Prostate gland (tissue), 2 donors: ENCODE measurements at regions of chr4 and their contacts with region 1.

Region 1: DNA sequence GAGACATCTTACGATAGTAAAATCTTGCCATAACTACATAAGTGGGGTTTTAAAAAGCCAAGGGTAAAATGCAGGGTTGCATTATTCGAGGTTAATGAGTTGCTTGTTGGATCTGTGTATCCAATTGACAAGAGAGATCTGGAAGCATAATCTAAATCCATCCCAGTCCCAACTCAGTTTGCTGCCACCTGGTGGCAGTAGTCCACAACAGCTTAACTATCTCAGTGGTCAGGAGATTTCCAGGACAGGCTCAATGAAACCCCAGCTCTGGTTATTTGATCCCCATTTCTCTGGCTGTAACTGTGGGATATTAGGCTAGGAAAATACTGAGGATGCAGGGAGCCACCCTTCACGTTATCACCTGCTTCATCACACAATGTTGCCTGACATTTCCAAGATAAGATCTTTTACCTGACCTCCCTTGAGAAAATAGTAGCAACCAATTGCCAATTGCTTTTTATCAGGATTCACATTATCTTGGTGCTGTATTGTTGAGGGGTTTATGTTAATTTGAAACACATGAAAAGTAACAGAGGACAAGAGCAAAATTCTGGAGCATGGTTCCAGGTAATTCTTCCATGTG is 88.2 kb upstream of the TNIP3 start:
- DNase-seq: peak; percentile 59
- H3K4me3 ChIP-seq: no peak overlapping the region
- H3K27ac ChIP-seq: no peak overlapping the region
- H3K4me1 ChIP-seq: no peaks in the 10 kb centered on the region
- H3K27me3 ChIP-seq: no peaks in the 10 kb centered on the region
- CTCF ChIP-seq: peak; percentile 70 to 85 (median 72)
- POLR2A ChIP-seq: no peak

Region 2: DNA sequence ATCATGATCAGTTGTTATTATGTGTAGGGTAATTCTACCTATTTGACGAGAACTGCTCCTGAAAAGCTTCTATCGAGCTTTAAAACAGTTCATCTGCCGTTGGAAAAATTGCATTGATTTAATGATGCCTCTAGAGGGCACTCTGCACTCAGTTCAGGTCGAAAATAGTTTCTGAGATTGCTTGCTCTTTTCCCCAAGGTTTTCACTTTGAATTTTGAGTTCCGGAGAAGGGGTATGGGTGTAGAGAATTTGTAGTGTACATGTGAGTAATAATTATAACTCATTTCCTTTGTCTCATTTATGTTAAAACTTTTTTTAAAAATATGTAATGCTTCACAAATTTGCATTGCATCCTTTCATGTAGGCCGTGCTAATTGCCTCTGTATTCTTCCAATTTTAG is 59.8 kb before region 1 on chr4:
- intact Hi-C with region 1: loop called (anchors 2 kb)
- DNase-seq: no peak
- H3K4me3 ChIP-seq: no peak overlapping the region
- H3K27ac ChIP-seq: no peak overlapping the region
- H3K4me1 ChIP-seq: no peaks in the 10 kb centered on the region
- H3K27me3 ChIP-seq: no peaks in the 10 kb centered on the region
- CTCF ChIP-seq: peak; percentile 11 to 63 (median 56)
- POLR2A ChIP-seq: no peak